CD8-positive, alpha-beta memory T cell (primary cell): ENCODE measurements at regions of chr5 and their contacts with region 1.

Region 1: GRCh38 chr5:142201471-142201887 is 92.9 kb downstream of the NDFIP1 start:
- DNase-seq: no peak
- H3K4me3 ChIP-seq: no peak overlapping the region
- H3K4me3 Mint-ChIP-seq: no peak overlapping the region
- H3K27ac ChIP-seq: no peak overlapping the region
- H3K27ac Mint-ChIP-seq: no peak overlapping the region
- H3K4me1 ChIP-seq: no peaks in the 10 kb centered on the region
- H3K4me1 Mint-ChIP-seq: no peaks in the 10 kb centered on the region
- H3K27me3 ChIP-seq: no peaks in the 10 kb centered on the region
- H3K27me3 Mint-ChIP-seq: no peaks in the 10 kb centered on the region

Region 2: DNA sequence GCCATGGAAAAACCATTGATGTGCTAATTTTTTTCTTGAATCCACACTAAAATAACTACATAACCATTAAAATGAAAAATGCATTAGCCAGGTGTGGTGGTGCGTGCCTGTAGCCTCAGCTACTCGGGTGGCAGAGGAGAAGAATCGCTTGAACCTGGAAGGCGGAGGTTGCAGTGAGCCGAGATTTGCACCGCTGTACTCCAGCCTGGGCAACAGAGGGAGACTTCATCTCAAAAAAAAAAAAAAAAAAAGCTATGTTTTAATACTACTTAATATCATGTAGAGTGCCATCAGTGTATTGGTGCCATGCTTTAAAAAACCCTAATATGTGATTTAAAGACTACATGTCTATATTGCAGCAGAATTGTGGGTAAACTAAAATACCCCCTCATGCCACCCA is 34.0 kb before region 1 on chr5:
- CTCF ChIA-PET with region 1: no interaction called
- POLR2A ChIA-PET with region 1: no interaction called
- DNase-seq: no peak
- H3K4me3 ChIP-seq: no peak overlapping the region
- H3K4me3 Mint-ChIP-seq: no peak overlapping the region
- H3K27ac ChIP-seq: no peak overlapping the region
- H3K27ac Mint-ChIP-seq: peak overlapping the region in 1 of 8 donors; percentile 36
- H3K4me1 ChIP-seq: no peaks in the 10 kb centered on the region
- H3K4me1 Mint-ChIP-seq: peaks cover 0 to 4% (median 0%) of the 10 kb centered on the region in 3 donors
- H3K27me3 ChIP-seq: no peaks in the 10 kb centered on the region
- H3K27me3 Mint-ChIP-seq: no peaks in the 10 kb centered on the region

Region 3: DNA sequence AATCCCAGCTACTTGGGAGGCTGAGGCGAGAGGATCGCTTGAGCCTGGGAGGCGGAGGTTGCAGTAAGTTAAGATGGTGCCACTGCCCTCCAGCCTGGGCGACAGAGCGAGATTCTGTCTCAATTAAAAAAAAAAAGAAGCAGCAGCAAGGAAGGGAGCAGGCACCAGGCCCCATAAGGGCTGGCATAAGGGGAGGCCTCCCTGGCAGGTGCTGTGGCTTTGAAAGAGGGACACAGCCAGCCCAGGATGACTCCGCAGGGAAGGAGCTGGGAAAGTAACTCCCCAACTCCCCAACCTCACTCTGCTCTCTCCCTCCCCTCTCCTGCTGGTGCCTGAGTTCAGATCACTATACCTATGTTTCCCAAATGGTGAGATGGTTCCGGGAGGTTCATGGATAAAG is 22.8 kb before region 1 on chr5:
- CTCF ChIA-PET with region 1: no interaction called
- POLR2A ChIA-PET with region 1: interaction called, 10 read pairs
- DNase-seq: no peak
- H3K4me3 ChIP-seq: no peak overlapping the region
- H3K4me3 Mint-ChIP-seq: no peak overlapping the region
- H3K27ac ChIP-seq: no peak overlapping the region
- H3K27ac Mint-ChIP-seq: no peak overlapping the region
- H3K4me1 ChIP-seq: no peaks in the 10 kb centered on the region
- H3K4me1 Mint-ChIP-seq: no peaks in the 10 kb centered on the region
- H3K27me3 ChIP-seq: no peaks in the 10 kb centered on the region
- H3K27me3 Mint-ChIP-seq: peaks cover 4 to 10% of the 10 kb centered on the region in 2 donors